ENCODE measurements at regions of chr7 and their contacts with region 1.

Region 1: DNA sequence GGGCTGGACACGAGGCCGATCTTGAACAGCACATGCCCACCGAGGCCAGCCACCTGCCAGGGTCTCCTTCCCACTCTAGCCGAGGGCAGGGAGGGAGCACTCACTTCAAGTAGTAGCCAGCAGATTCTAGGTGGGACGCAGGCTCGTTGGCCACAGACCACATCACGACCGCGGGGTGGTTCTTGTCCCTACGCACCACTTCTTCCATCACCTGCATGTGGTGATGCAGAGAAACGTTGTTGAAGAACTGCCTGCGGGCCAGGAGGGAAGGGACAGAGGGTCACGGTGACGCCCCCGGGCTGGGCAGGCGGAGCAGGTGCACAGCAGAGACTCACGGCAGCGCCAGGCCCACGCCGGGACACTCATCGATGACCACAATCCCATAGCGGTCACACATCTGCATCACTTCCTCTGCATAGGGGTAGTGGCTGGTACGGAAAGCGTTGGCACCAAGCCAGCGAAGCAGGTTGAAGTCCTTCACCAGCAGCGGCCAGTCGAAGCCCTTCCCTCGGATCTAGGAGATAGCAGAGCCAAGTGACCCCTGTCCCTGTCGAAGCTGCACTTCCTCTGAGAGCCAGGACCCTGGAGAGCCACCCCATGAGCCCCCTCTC is 7.7 kb downstream of the GUSB start:
- DNase-seq: peak in 1 of 5 donors; percentile 37
- H3K4me3 ChIP-seq: no peak overlapping the region
- H3K27ac ChIP-seq: no peak overlapping the region
- H3K4me1 ChIP-seq: no peaks in the 10 kb centered on the region
- H3K27me3 ChIP-seq: no peaks in the 10 kb centered on the region
- CTCF ChIP-seq: no peak
- EP300 ChIP-seq: no peak
- POLR2A ChIP-seq: no peak

Region 2: GRCh38 chr7:65746398-65746669 is 228.0 kb before region 1 on chr7:
- intact Hi-C with region 1: loop called in 1 of 4 experiments (anchors 10 kb)
- DNase-seq: no peak
- H3K4me3 ChIP-seq: no peak overlapping the region
- H3K27ac ChIP-seq: no peak overlapping the region
- H3K4me1 ChIP-seq: peaks cover 11% of the 10 kb centered on the region
- H3K27me3 ChIP-seq: no peaks in the 10 kb centered on the region
- CTCF ChIP-seq: no peak
- EP300 ChIP-seq: no peak
- POLR2A ChIP-seq: no peak

Measured in ovary (tissue), 10 donors.